Activated CD4-positive, alpha-beta T cell treated with anti-CD3 and anti-CD28 coated beads for 36 hours (primary cell): ENCODE measurements at regions of chr5 and their contacts with region 1.

Region 1: DNA sequence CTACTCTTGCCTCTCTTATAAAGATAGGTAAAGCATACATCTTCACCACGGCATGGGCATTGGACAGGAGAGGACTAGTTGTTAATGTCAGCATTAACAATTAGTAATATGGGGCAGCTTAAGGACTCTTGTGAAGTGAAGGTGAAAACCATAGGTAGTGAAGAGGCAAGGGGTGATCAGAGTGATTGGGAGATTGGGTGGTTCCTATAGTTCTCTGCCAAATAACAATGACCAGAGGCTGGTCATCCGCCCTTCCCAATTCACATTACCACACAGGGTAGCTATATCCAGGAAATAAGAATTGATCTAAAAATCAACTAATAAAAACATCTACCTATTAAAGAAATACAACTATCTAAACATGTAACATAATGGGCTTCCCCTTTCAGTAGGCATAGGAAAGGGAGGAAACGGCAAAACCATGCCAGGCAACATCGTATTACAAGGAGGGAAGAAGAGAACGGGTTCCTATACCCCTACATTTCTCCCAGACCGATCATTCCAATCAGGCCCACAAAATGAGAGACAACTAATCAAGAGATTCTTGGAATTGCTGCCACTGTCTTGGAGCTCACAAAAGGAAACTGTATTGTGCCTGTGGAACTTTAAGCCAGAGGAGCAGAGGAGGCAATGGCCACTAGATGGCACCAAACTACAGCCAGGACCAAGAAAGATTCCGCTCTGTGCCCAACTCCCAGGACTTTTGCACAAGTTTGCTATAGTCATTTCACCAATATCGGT is 121.6 kb downstream of the FBXL17 start:
- DNase-seq: peak; percentile 83
- ATAC-seq: peak; percentile 90
- H3K4me3 Mint-ChIP-seq: peak overlapping the region; percentile 32
- H3K27ac Mint-ChIP-seq: no peak overlapping the region
- H3K4me1 Mint-ChIP-seq: peaks cover 12% of the 10 kb centered on the region
- H3K27me3 Mint-ChIP-seq: no peaks in the 10 kb centered on the region

Region 2: DNA sequence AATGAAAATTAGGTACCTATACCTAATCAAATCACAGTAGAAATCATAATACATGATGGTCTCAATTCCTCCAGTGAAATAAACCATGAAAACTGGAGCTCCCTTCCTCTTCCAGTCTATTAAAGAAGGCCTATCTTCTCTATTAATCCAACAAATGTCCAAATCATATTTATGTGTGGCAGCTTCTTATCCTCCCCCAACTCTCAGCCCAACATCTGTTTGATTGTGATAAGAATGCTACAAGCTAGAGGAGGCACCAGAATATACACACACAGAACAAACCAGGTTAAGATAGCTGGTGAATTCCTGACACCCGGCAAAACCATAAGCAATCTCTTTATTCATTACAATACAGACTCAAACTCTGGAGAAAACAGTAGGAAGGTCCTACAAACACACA is 10.8 kb after region 1 on chr5:
- CTCF ChIA-PET with region 1: interaction called, 23 read pairs
- POLR2A ChIA-PET with region 1: no interaction called
- intact Hi-C with region 1: no loop called
- DNase-seq: no peak
- ATAC-seq: no peak
- H3K4me3 Mint-ChIP-seq: no peak overlapping the region
- H3K27ac Mint-ChIP-seq: no peak overlapping the region
- H3K4me1 Mint-ChIP-seq: no peaks in the 10 kb centered on the region
- H3K27me3 Mint-ChIP-seq: no peaks in the 10 kb centered on the region

Region 3: DNA sequence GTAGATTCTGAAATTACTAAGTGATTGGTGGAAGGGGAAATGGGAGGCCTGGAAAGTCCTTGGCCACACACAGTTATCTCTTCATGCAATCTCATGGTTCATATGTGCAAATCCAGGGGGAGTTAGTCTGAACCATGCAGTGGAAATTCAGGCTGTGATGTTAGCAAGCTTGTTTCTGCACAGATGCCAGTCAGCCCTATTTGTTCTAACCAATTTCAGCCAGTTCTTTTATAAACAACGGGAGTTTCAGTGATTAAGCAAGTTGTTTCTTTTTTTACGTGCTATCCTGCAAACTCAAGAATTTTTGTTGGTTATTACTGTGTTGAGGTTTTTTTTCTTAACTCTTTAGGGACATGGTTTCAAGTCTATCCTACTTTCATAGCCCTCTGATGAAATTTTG is 785.4 kb after region 1 on chr5:
- CTCF ChIA-PET with region 1: no interaction called
- POLR2A ChIA-PET with region 1: no interaction called
- intact Hi-C with region 1: loop called in 1 of 2 experiments (anchors 5 kb)
- DNase-seq: no peak
- ATAC-seq: no peak
- H3K4me3 Mint-ChIP-seq: no peak overlapping the region
- H3K27ac Mint-ChIP-seq: no peak overlapping the region
- H3K4me1 Mint-ChIP-seq: no peaks in the 10 kb centered on the region
- H3K27me3 Mint-ChIP-seq: no peaks in the 10 kb centered on the region